Dorsolateral prefrontal cortex (tissue), 120 donors: ENCODE measurements at regions of chr17 and their contacts with region 1.

Region 1: DNA sequence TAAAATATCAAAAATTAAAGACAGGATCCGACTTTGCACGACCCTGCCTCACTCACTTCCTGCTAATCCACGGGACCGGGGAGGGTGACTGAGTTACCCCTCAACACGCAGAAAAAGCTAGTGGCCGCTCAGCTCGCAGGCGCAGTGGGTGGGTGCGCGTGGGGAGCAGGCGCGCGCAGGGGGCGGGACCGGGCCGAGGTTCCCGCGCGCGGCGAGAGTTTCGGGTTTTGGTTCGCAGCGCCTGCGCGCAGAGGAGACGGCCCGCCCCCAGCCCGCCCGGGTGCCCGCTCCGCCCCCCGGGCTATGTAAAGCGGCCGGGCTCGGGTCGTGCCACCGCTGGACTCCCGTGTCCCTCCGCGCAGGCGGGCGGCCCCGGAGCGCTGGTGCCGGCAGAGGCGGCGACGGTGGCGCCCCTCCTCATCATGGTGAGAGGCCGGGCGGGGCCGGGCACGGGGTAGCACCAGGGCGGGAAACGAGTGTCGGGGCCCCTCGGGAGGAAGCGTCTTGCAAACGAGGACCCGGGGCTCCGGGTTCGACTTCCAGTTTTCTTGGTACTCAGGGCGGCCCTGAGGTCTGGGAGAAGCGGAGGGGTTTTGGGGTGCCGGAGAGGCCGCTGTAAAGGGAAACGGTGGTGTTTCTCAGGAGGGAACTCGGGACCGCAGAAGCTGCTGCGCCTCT is at the start of gene CNP:
- DNase-seq: peak; percentile 87 to 93 (median 90)
- H3K4me3 ChIP-seq: peak within 1 kb of the TSS; percentile 58 to 99 (median 96)
- H3K27ac ChIP-seq: peak within 1 kb of the TSS; percentile 93 to 100 (median 98)
- H3K27me3 ChIP-seq: no peaks in the 10 kb centered on the region
- CTCF ChIP-seq: peak in 35 of 56 donors; percentile 1 to 56 (median 31)
- total RNA-seq, gene CNP: 166 to 3,303 (median 637) TPM

Region 2: DNA sequence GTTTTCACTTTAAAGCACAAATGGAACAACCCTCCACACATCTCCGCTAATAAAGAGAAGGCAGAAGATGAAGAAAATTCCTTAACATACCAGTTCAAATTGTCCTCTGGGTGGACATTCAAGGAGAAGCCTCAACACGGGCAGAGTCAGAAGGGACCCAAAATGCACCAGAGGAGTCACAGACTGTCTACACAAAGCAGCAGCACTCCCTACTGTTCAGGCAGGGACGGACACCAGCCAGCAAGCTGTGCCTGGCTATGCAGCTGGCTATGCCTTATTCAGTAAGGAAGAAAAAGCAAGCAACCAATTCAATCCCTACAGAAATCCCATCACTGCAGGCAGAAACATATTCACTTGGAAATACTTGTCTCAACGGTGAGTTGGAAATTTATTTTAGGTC is 42.6 kb after region 1 on chr17:
- intact Hi-C with region 1: loop called (anchors 1 kb)
- DNase-seq: peak in 9 of 10 donors; percentile 57 to 86 (median 80)
- H3K4me3 ChIP-seq: peak overlapping the region in 2 of 59 donors; percentile 1 to 26
- H3K27ac ChIP-seq: peak overlapping the region in 52 of 59 donors; percentile 1 to 100 (median 66)
- H3K27me3 ChIP-seq: no peaks in the 10 kb centered on the region
- CTCF ChIP-seq: peak in 54 of 56 donors; percentile 27 to 91 (median 69)

Region 3: DNA sequence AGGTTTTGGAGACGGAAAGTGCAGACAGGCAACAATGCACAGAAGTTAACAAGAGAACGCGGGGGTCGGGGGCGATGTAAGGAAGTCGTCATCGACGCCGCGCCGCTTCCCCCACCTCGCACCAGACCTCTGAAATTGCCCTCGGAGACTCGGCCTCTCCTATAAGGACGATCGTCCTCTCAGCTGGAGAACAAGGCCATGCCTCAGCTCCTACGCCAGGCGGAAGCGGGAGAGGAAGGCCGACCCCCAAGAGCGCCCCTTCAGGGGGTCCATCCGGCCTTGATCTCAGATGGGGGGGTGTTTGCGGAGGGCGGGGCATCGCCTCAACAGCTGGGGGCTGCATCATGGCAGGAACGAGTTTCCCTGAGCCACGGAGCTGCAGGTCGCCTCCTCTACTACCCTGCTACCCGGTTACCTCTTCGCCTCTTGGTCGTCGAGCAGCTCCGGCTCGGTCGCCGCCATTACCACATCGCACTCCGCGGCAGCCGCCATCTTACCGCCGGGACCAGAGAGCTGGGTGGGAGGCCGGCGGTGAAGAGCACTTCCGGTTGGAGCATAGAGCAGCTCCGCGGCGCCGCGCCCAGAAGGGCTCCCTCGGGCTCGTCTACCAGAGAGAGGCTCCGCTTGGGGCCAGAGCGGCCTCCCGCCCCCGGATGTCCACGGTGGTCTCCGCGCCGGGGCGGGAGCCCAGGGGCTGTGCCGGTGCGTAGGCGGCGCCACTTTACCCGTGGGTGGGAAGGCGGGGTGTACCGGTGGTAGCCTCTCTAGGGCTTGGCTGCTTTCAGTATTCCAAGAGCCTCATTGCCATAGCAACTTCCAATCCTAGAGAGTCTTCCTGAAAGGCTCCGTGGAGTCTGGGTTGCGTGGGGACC is 50.6 kb after region 1 on chr17 and contains the start of gene DNAJC7:
- intact Hi-C with region 1: loop called (anchors 2 kb)
- DNase-seq: peak; percentile 84 to 95 (median 92)
- H3K4me3 ChIP-seq: peak within 1 kb of the TSS; percentile 52 to 100 (median 95)
- H3K27ac ChIP-seq: peak within 1 kb of the TSS; percentile 65 to 98 (median 95)
- H3K27me3 ChIP-seq: no peaks in the 10 kb centered on the region
- CTCF ChIP-seq: peak in 55 of 56 donors; percentile 9 to 79 (median 55)
- total RNA-seq, gene DNAJC7: 88.3 to 157 (median 125) TPM